ENCODE measurements at regions of chr18 and their contacts with region 1.

Region 1: GRCh38 chr18:48445540-48445939 is 36.4 kb upstream of the ZBTB7C start:
- DNase-seq: peak; percentile 86 to 90
- H3K4me3 ChIP-seq: no peak overlapping the region
- H3K27ac ChIP-seq: peak overlapping the region in 1 of 2 donors; percentile 42
- H3K4me1 ChIP-seq: peaks cover 0 to 41% (median 32%) of the 10 kb centered on the region in 4 donors
- H3K27me3 ChIP-seq: no peaks in the 10 kb centered on the region
- CTCF ChIP-seq: peak; percentile 77 to 84

Region 2: DNA sequence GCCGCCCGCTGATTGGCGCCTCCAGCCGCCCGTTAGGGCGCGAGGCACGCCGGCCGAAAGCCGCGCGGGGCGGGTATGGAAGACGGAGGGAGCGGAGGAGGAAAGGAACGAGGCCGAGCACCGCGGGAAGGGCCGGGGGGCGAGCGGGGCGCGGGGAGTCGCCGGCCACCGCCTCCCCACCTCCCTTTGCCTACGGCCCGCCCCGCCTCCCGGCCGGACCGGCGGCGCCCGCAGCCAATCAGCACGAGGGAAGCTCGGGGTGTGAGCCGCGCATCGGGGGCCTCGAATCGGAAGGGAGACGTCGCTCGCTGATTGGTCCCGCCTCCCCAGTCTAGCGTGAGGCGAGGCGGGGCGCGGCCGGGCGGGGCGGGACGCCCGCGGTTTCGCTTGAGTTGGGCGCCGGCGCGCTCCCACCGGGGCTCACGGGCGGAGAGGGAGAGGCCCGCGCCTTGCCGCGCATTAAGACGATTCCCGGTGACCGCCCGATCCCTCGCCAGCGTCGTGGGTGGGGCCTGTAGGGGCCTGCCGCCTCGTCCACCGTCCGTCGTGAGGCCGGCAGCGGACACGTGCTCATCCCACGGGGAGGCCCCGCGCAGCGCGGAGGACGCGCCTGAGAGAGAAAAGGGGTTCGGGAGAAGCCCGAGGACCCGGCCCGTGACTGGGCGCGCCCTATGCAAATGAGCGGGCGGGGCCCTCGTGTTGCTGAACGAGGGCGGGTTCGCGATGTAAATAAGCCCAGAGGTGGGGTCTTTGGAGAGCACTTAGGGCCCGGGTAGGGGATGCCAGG is 514.4 kb before region 1 on chr18:
- intact Hi-C with region 1: loop called (anchors 10 kb)
- DNase-seq: peak; percentile 96 to 98
- H3K4me3 ChIP-seq: peak overlapping the region; percentile 78 to 87
- H3K27ac ChIP-seq: peak overlapping the region; percentile 87 to 95
- H3K4me1 ChIP-seq: peaks cover 0 to 41% (median 14%) of the 10 kb centered on the region in 4 donors
- H3K27me3 ChIP-seq: no peaks in the 10 kb centered on the region
- CTCF ChIP-seq: no peak

Region 3: GRCh38 chr18:48030616-48031480 is 414.7 kb before region 1 on chr18:
- intact Hi-C with region 1: loop called (anchors 2 kb)
- DNase-seq: peak; percentile 30 to 70
- H3K4me3 ChIP-seq: no peak overlapping the region
- H3K27ac ChIP-seq: no peak overlapping the region
- H3K4me1 ChIP-seq: peaks cover 0 to 40% (median 24%) of the 10 kb centered on the region in 4 donors
- H3K27me3 ChIP-seq: no peaks in the 10 kb centered on the region
- CTCF ChIP-seq: peak; percentile 70

Region 4: DNA sequence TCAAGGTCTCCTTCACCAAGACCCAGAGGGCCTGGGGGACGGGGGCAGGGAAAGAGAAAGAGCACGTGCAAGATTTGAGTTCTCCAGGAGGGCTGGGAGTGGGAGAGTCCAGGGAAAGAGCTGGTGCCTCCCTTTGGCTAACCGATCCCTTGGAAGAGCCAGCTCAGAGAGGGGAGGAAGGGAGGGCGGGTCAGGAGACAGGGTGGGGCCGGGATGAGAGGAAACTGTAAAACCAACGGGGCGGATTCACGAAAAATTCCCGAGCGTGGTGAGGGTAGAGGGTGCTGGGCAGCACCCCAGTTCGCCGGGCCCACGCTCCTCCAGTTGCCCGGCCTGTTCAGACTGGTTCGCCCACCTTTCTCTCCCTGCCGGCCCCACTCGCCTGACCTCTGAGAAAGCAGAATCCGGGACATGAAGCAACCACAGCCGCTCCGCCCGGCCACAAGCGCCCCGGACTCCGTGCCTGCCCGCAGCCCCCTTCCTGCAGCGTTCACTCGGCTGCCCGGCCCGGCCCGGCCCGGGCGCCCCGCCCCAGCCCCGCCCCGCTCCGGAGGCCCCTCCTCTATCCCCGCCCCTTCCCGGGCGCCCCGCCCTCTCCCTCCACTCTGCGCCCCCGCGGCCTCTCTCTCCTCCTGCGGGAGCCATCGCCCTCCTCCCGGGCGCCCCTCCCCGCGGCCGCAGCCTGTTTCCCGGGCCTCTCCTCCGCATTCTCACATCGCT is 284.2 kb before region 1 on chr18:
- intact Hi-C with region 1: loop called (anchors 5 kb)
- DNase-seq: peak; percentile 80 to 89
- H3K4me3 ChIP-seq: peak overlapping the region; percentile 71 to 80
- H3K27ac ChIP-seq: peak overlapping the region; percentile 85 to 87
- H3K4me1 ChIP-seq: peaks cover 0 to 44% (median 12%) of the 10 kb centered on the region in 4 donors
- H3K27me3 ChIP-seq: no peaks in the 10 kb centered on the region
- CTCF ChIP-seq: no peak

Region 5: DNA sequence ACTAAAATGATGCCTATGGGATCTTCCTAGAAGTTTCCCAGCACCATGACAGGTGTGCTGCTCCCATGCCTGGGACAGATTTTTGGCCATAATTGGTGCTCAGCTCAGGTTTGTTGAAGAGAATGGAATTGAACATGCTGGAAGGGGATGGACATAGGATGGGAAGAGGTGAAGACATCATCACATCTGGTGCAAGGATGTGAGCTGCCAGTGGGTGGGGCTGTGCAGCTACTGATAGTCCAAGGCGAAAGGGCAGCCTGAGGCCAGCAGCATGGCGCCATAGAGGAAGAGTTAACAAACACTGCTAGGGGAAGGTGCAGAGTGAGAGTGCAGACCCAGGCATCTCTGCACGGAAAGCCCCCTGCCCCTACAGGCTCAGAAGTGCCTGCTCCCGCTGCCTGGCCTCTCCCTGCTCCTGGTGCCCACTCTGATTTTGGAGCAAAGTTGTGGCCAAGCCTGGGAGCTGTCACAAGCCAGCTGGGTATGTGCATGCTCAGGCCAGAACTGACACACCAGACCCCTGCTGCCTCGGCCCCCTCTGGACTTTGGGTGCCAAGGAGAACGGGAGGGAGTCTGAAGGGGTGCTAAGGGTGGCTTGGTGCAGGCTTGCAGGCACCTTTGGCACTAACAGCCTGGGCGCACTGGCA is 214.9 kb before region 1 on chr18:
- intact Hi-C with region 1: loop called (anchors 5 kb)
- DNase-seq: peak in 1 of 2 donors; percentile 76
- H3K4me3 ChIP-seq: no peak overlapping the region
- H3K27ac ChIP-seq: no peak overlapping the region
- H3K4me1 ChIP-seq: peaks cover 0 to 35% (median 18%) of the 10 kb centered on the region in 4 donors
- H3K27me3 ChIP-seq: no peaks in the 10 kb centered on the region
- CTCF ChIP-seq: peak; percentile 16 to 39

Region 6: GRCh38 chr18:48330403-48331022 is 115.0 kb before region 1 on chr18:
- intact Hi-C with region 1: loop called (anchors 10 kb)
- DNase-seq: no peak
- H3K4me3 ChIP-seq: no peak overlapping the region
- H3K27ac ChIP-seq: peak overlapping the region; percentile 41 to 53
- H3K4me1 ChIP-seq: peaks cover 0 to 59% (median 30%) of the 10 kb centered on the region in 4 donors
- H3K27me3 ChIP-seq: no peaks in the 10 kb centered on the region
- CTCF ChIP-seq: no peak

Region 7: DNA sequence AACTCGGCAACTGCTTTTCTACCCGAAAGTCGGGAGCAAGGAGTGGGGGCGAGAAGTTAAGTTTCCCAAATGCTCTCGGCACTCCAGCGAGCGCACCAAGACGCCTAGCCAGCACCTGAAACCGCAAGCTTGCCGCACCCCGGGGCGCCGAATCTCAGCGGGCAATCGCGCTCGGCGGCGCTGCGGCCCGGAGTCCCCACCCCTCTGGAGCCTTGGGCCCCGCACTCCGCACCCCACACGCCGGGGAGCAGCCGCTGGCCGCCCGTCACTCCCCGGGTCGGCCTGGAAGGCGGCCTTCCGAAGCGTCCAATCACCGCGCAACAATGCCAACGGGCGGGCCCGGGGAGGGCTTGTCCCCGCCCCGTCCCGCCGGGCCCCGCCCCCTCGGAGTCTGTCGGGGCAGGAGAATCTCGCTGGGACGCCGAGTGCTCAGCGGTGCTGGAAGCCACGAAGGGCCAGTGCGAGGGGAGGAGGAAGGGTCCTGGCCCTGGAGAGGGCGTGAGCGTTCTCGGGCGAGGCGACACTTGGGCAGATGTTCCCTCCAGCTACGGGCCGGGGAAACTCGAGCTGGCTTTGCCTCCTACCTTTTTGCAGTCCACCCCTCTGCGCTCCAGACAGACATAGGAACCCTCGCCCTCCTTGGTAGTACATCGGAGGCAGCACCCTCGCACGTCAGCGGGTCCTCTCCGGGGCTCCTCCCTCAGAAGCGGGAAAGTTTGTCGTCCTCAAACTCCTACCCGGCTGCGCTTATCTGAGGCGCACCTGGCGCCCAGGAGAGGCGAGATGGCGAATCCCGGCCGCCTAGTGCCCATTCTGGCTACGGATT is 35.2 kb before region 1 on chr18:
- intact Hi-C with region 1: loop called (anchors 5 kb)
- DNase-seq: peak; percentile 93 to 96
- H3K4me3 ChIP-seq: peak overlapping the region; percentile 89 to 92
- H3K27ac ChIP-seq: peak overlapping the region; percentile 85 to 91
- H3K4me1 ChIP-seq: peaks cover 0 to 36% (median 21%) of the 10 kb centered on the region in 4 donors
- H3K27me3 ChIP-seq: no peaks in the 10 kb centered on the region
- CTCF ChIP-seq: peak in 1 of 2 experiments; percentile 11

Region 8: GRCh38 chr18:48580782-48581181 is 135.2 kb after region 1 on chr18:
- intact Hi-C with region 1: no loop called
- DNase-seq: peak in 1 of 2 donors; percentile 58
- H3K4me3 ChIP-seq: no peak overlapping the region
- H3K27ac ChIP-seq: peak overlapping the region; percentile 18 to 61
- H3K4me1 ChIP-seq: peaks cover 0 to 65% (median 37%) of the 10 kb centered on the region in 4 donors
- H3K27me3 ChIP-seq: no peaks in the 10 kb centered on the region
- CTCF ChIP-seq: no peak

Measured in tibial artery (tissue), 4 donors.